ENCODE measurements at regions of chr10 and their contacts with region 1.

Region 1: GRCh38 chr10:110497438-110498086 is at the start of gene DUSP5:
- DNase-seq: peak; percentile 99
- ATAC-seq: peak; percentile 87
- H3K4me3 Mint-ChIP-seq: peak within 1 kb of the TSS; percentile 90
- H3K27ac Mint-ChIP-seq: peak within 1 kb of the TSS; percentile 77
- H3K4me1 Mint-ChIP-seq: peaks cover 66% of the 10 kb centered on the region
- H3K27me3 Mint-ChIP-seq: peaks cover 3% of the 10 kb centered on the region
- CTCF ChIP-seq: no peak
- total RNA-seq, gene DUSP5: 26.1 and 28.6 TPM in 2 replicates

Region 2: GRCh38 chr10:109922976-109923921 is 574.3 kb before region 1 on chr10 and contains the start of gene XPNPEP1:
- CTCF ChIA-PET with region 1: no interaction called
- POLR2A ChIA-PET with region 1: no interaction called
- intact Hi-C with region 1: loop called (anchors 5 kb)
- DNase-seq: peak; percentile 85
- ATAC-seq: peak; percentile 94
- H3K4me3 Mint-ChIP-seq: peak within 1 kb of the TSS; percentile 88
- H3K27ac Mint-ChIP-seq: peak within 1 kb of the TSS; percentile 81
- H3K4me1 Mint-ChIP-seq: peaks cover 36% of the 10 kb centered on the region
- H3K27me3 Mint-ChIP-seq: peaks cover 2% of the 10 kb centered on the region
- CTCF ChIP-seq: no peak
- total RNA-seq, gene XPNPEP1: 53.5 and 70.6 TPM in 2 replicates

Region 3: GRCh38 chr10:110311357-110311949 is 186.1 kb before region 1 on chr10:
- CTCF ChIA-PET with region 1: interaction called, 6 read pairs
- POLR2A ChIA-PET with region 1: interaction called, 7 read pairs
- intact Hi-C with region 1: loop called (anchors 1 kb)
- DNase-seq: no peak
- ATAC-seq: peak; percentile 83
- H3K4me3 Mint-ChIP-seq: no peak overlapping the region
- H3K27ac Mint-ChIP-seq: peak overlapping the region; percentile 13
- H3K4me1 Mint-ChIP-seq: peaks cover 19% of the 10 kb centered on the region
- H3K27me3 Mint-ChIP-seq: no peaks in the 10 kb centered on the region
- CTCF ChIP-seq: no peak

Region 4: DNA sequence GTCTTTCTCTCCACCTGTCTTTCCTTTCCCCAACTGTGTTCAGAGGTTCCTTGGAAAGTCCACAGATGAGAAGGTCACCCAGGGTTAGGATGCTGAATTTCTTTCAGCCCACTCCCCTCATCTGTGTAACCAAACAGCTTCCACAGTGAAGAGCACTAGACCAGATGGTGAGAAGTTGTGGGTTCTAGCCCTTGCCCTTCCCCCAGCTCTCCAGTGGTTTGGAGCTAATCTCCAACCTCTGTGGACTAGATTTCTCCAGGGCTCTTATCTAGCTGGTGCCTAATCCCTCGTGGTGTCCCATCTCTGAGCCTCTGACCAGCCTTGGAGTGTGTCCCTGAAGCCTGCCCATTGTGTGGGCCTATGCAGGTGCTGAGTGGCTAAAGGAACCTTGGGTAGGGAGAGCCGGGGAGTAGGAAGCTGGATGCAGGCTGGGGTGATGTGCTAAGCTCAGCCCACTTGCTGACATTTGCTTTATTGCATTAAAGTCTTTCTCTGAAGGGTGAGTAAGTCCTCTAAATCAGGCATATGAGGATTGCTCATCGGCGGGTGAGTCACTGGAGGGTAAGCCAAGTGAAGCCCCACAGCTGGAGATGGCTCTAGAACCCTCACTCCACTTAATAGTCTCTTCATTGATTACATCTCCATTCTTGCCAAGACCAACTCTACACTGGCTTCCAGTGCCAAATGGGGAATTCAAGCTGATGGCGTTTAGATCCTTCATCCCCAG is 15.1 kb after region 1 on chr10:
- CTCF ChIA-PET with region 1: no interaction called
- POLR2A ChIA-PET with region 1: interaction called, 15 read pairs
- intact Hi-C with region 1: no loop called
- DNase-seq: no peak
- ATAC-seq: peak; percentile 95
- H3K4me3 Mint-ChIP-seq: peak overlapping the region; percentile 46
- H3K27ac Mint-ChIP-seq: peak overlapping the region; percentile 71
- H3K4me1 Mint-ChIP-seq: peaks cover 31% of the 10 kb centered on the region
- H3K27me3 Mint-ChIP-seq: no peaks in the 10 kb centered on the region
- CTCF ChIP-seq: no peak

Region 5: GRCh38 chr10:110547139-110547761 is 49.7 kb after region 1 on chr10:
- CTCF ChIA-PET with region 1: interaction called, 25 read pairs
- POLR2A ChIA-PET with region 1: interaction called, 5 read pairs
- intact Hi-C with region 1: loop called (anchors 1 kb)
- DNase-seq: no peak
- ATAC-seq: peak; percentile 67
- H3K4me3 Mint-ChIP-seq: no peak overlapping the region
- H3K27ac Mint-ChIP-seq: no peak overlapping the region
- H3K4me1 Mint-ChIP-seq: peaks cover 6% of the 10 kb centered on the region
- H3K27me3 Mint-ChIP-seq: peaks cover 10% of the 10 kb centered on the region
- CTCF ChIP-seq: no peak